Sigmoid colon (tissue), 7 donors: ENCODE measurements at regions of chr12 and their contacts with region 1.

Region 1: DNA sequence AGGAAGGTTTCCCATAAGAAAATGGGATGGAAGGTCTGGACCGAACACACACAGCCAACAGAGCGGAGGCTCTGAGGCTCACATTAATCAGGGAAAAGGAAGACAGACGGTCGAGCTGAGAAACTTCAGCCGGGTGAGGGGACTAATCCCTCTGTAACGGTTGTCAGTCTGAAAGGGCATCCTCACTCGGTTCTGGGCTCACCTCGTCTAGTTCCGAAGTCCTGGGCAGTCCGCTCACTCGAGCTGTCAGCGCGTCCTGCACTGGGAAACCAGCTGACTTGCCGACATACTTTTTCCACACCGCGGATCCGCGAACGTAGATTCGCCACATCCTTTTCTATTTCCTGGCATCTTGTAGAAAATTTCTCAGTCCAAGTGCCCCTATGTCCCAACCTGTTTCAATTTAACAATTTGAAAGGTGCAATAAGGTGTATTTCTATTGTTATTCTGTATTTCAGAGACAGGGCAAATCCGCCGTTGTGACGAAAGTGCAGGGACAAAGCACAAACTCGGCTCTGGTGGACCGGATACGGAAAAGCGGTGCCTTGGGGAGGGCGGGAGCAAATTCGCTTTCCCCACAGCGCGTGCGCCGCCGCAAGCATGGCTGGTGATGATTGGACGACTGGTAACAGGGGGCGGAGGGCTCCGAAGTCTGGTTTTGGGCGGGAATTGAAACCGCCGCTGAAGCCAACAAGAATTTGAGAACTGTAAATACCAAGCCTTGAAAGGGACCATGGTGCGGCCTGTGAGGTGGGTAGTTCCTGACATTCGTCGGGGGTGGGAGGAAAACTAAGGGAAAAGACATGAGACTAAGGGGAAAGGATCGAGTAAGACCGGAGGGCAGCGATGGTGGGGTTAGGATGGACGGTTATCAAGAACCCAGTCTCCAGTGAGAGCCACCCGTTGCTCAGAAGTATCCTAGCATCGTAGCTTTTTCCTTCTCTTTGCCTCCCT is at the start of gene RAD51AP1:
- DNase-seq: peak; percentile 96
- H3K4me3 ChIP-seq: peak within 1 kb of the TSS; percentile 64 to 81 (median 74)
- H3K27ac ChIP-seq: peak within 1 kb of the TSS; percentile 86 to 94 (median 89)
- H3K4me1 ChIP-seq: peaks cover 0 to 19% (median 15%) of the 10 kb centered on the region in 4 donors
- H3K27me3 ChIP-seq: no peaks in the 10 kb centered on the region
- CTCF ChIP-seq: no peak
- EP300 ChIP-seq: peak in 1 of 4 donors; percentile 13
- POLR2A ChIP-seq: no peak
- total RNA-seq, gene RAD51AP1: 0.49 to 2.5 (median 1.5) TPM

Region 2: DNA sequence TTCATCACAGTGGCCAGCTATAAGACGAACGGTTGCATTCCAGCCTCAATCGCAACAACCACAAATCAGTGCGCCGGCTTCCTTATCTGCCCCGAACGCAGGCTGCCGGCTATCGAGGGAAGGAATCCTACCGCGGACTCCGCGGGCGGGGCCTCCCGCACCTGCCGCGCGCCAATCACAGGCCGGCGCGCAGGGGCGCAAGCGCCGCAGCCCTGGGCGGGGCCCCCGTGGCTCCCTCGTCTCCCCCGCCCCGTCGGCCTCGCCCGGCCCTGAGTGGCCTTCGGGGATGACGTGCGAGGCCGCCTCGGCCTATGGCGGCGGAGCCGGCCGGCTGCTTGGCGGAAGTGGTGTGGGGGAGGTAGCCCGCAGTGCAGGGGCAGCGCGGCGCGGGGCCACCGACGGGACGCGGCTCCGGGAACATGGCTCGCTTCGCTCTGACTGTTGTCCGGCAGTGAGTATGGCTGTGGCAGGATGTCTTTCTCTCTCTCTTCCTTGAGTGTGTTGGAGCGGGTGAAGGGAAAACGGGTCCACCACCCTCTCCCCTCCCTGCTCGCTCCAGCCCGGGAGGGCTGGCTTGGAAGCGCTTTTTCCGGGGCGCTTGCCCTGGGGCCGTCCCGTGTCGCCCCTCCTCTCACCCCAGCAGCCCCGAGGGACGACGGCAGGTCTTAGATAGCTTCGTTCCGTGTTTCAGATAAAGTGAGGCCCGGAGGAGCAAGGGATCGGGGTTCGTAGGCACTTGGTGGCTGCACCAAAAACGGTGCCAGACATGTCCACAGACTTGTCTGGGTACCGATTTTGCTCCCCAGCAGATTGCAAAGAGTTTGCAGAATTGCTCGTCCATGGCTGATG is 217.4 kb before region 1 on chr12 and contains the start of gene TIGAR:
- intact Hi-C with region 1: loop called (anchors 10 kb)
- DNase-seq: peak; percentile 97
- H3K4me3 ChIP-seq: peak within 1 kb of the TSS; percentile 84 to 96 (median 87)
- H3K27ac ChIP-seq: peak within 1 kb of the TSS; percentile 88 to 96 (median 94)
- H3K4me1 ChIP-seq: peaks cover 0 to 31% (median 20%) of the 10 kb centered on the region in 4 donors
- H3K27me3 ChIP-seq: no peaks in the 10 kb centered on the region
- CTCF ChIP-seq: no peak
- EP300 ChIP-seq: no peak
- POLR2A ChIP-seq: peak; percentile 86 to 89
- total RNA-seq, gene TIGAR: 4.4 to 6.0 (median 5.2) TPM

Region 3: GRCh38 chr12:4402996-4403395 is 135.5 kb before region 1 on chr12:
- intact Hi-C with region 1: no loop called
- DNase-seq: no peak
- H3K4me3 ChIP-seq: no peak overlapping the region
- H3K27ac ChIP-seq: no peak overlapping the region
- H3K4me1 ChIP-seq: no peaks in the 10 kb centered on the region
- H3K27me3 ChIP-seq: no peaks in the 10 kb centered on the region
- CTCF ChIP-seq: no peak
- EP300 ChIP-seq: no peak
- POLR2A ChIP-seq: no peak

Region 4: GRCh38 chr12:4421590-4422031 is 116.9 kb before region 1 on chr12:
- intact Hi-C with region 1: loop called (anchors 5 kb)
- DNase-seq: no peak
- H3K4me3 ChIP-seq: no peak overlapping the region
- H3K27ac ChIP-seq: no peak overlapping the region
- H3K4me1 ChIP-seq: peaks cover 0 to 27% (median 20%) of the 10 kb centered on the region in 4 donors
- H3K27me3 ChIP-seq: no peaks in the 10 kb centered on the region
- CTCF ChIP-seq: peak in 2 of 4 experiments; percentile 36 to 51
- EP300 ChIP-seq: no peak
- POLR2A ChIP-seq: no peak

Region 5: GRCh38 chr12:4555804-4556203 is 17.3 kb after region 1 on chr12:
- intact Hi-C with region 1: no loop called
- DNase-seq: no peak
- H3K4me3 ChIP-seq: no peak overlapping the region
- H3K27ac ChIP-seq: no peak overlapping the region
- H3K4me1 ChIP-seq: no peaks in the 10 kb centered on the region
- H3K27me3 ChIP-seq: no peaks in the 10 kb centered on the region
- CTCF ChIP-seq: no peak
- EP300 ChIP-seq: no peak
- POLR2A ChIP-seq: no peak

Region 6: DNA sequence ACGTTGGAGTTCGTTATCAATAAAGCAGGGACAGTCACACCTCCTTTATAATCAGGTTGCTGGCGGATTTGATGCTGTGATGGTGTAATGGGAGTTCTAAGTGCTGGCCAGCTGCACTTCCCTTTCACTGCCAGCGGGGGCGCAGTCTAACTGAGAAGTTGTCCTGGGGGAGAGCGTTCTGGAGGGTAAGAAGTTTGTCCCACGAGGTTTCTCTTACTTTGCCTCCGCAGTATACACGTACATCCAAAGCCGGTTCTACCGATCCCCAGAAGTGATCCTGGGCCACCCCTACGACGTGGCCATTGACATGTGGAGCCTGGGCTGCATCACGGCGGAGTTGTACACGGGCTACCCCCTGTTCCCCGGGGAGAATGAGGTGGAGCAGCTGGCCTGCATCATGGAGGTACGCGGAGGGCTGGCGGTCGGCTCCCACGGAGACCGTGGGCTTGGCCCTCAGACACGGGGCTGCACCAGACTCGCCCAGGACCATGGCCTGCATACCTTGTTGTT is 66.3 kb after region 1 on chr12:
- intact Hi-C with region 1: loop called (anchors 5 kb)
- DNase-seq: peak; percentile 90
- H3K4me3 ChIP-seq: peak overlapping the region; percentile 71 to 86 (median 76)
- H3K27ac ChIP-seq: peak overlapping the region; percentile 73 to 79 (median 78)
- H3K4me1 ChIP-seq: peaks cover 0 to 19% (median 16%) of the 10 kb centered on the region in 4 donors
- H3K27me3 ChIP-seq: no peaks in the 10 kb centered on the region
- CTCF ChIP-seq: peak; percentile 88 to 98 (median 96)
- EP300 ChIP-seq: no peak
- POLR2A ChIP-seq: no peak

Region 7: DNA sequence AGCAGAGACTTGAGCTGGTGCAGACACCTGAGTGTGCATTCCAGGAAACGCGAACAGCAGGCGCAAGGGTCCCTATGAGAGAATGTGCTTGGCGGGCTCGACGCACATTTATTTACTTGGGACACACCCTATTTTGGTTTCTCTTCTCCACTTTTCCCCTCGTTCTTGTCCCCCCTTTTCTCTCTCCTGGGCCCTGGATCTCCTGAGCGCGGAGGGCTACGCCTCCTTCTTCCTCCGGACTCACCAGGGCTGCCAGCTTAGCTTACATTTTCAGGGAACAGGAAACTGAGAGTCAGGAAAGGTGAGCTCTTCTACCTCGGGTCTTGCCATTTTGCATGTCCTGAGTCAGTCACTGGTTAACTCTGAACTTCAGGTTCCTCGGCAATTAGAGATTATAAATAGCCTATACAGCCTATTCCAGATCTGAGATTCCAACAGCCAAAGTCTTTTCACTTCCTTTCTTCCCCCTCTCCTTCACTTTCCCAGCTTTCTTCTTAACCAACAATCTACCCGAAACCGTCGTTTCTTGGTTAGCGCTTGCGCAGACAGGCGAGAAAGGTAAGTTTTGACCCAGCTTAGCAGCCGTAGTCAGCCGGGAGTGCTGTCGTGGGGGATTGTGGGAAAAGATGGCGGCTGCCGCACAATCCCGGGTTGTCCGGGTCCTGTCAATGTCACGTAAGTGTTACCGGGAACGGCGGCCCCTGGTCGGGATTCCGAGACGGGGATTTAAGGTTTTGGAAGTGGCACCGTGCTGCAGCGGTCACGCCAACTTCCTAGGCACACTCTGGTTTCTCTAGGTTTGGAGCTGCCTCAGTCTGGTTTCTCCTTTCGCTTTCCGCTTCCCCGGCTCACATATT is 110.2 kb after region 1 on chr12 and contains the starts of genes AKAP3 and NDUFA9:
- intact Hi-C with region 1: loop called (anchors 5 kb)
- DNase-seq: peak; percentile 89
- H3K4me3 ChIP-seq: peak within 1 kb of the TSS; percentile 57 to 68 (median 65)
- H3K27ac ChIP-seq: peak within 1 kb of the TSS; percentile 81 to 85 (median 84)
- H3K4me1 ChIP-seq: peaks cover 0 to 37% (median 23%) of the 10 kb centered on the region in 4 donors
- H3K27me3 ChIP-seq: no peaks in the 10 kb centered on the region
- CTCF ChIP-seq: no peak
- EP300 ChIP-seq: no peak
- POLR2A ChIP-seq: peak in 1 of 2 donors; percentile 48
- total RNA-seq, gene AKAP3: 0.36 to 1.6 (median 0.91) TPM
- total RNA-seq, gene NDUFA9: 21.3 to 41.1 (median 38.7) TPM

Region 8: DNA sequence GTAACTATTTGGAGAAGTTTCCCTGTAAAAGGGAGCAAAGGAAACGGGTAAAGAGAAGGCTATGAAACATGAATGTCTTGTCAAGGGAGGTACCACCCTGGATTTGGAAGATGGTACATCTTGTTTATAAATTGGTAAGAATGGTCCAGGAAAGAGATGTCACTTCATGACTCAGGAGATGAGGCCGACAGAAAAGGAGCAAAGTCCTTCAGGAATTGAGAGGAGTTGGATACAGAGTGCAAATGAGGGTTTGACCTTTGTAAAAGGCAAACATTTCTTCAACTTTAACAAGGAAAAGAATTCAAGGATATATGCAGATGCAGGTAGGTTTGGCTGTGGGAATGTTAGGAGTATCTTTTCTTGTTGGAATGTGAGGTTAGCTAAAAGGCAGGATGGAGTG is 141.2 kb after region 1 on chr12:
- intact Hi-C with region 1: no loop called
- DNase-seq: no peak
- H3K4me3 ChIP-seq: no peak overlapping the region
- H3K27ac ChIP-seq: no peak overlapping the region
- H3K4me1 ChIP-seq: no peaks in the 10 kb centered on the region
- H3K27me3 ChIP-seq: no peaks in the 10 kb centered on the region
- CTCF ChIP-seq: no peak
- EP300 ChIP-seq: no peak
- POLR2A ChIP-seq: no peak

Region 9: DNA sequence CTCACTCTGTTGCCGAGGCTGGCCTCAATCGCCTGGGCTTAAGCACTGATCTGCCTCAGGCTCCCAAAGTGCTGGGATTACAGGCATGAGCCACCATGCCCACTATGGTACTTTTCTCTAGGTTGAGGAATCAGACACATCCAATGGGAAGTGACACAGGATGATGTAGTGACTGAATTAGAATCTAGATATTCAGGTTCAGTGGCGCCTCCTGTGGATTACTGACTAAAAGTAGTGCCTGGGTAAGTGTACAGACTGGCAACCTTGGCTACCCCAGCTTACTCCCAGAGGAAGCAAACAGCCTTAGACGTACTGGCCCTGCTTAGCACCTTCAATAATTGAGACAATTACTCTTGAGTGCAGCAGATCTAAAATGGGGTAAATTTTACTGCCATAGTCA is 204.6 kb after region 1 on chr12:
- intact Hi-C with region 1: no loop called
- DNase-seq: no peak
- H3K4me3 ChIP-seq: no peak overlapping the region
- H3K27ac ChIP-seq: no peak overlapping the region
- H3K4me1 ChIP-seq: no peaks in the 10 kb centered on the region
- H3K27me3 ChIP-seq: no peaks in the 10 kb centered on the region
- CTCF ChIP-seq: no peak
- EP300 ChIP-seq: no peak
- POLR2A ChIP-seq: no peak